ENCODE measurements at regions of chr14 and their contacts with region 1.

Region 1: GRCh38 chr14:29410581-29410980 is 517.1 kb downstream of the PRKD1 start:
- DNase-seq: no peak
- ATAC-seq: no peak
- H3K4me3 ChIP-seq: no peak overlapping the region
- H3K27ac ChIP-seq: no peak overlapping the region
- H3K4me1 ChIP-seq: no peaks in the 10 kb centered on the region
- H3K27me3 ChIP-seq: no peaks in the 10 kb centered on the region
- CTCF ChIP-seq: no peak
- EP300 ChIP-seq: no peak
- POLR2A ChIP-seq: no peak
- RAD21 ChIP-seq: no peak

Region 2: GRCh38 chr14:29521526-29522137 is 111.1 kb after region 1 on chr14:
- CTCF ChIA-PET with region 1: no interaction called
- POLR2A ChIA-PET with region 1: no interaction called
- in situ Hi-C with region 1: no loop called
- intact Hi-C with region 1: loop called (anchors 1 kb)
- DNase-seq: no peak
- ATAC-seq: peak; percentile 68
- H3K4me3 ChIP-seq: no peak overlapping the region
- H3K27ac ChIP-seq: no peak overlapping the region
- H3K4me1 ChIP-seq: no peaks in the 10 kb centered on the region
- H3K27me3 ChIP-seq: no peaks in the 10 kb centered on the region
- CTCF ChIP-seq: peak; percentile 65
- EP300 ChIP-seq: no peak
- POLR2A ChIP-seq: no peak
- RAD21 ChIP-seq: no peak

Measured in HepG2 (cell line).